Uterus (tissue), 4 donors: ENCODE measurements at regions of chr22 and their contacts with region 1.

Region 1: GRCh38 chr22:46315976-46316375 is 19.3 kb downstream of the GTSE1 start:
- DNase-seq: no peak
- H3K4me3 ChIP-seq: no peak overlapping the region
- H3K27ac ChIP-seq: no peak overlapping the region
- H3K4me1 ChIP-seq: no peaks in the 10 kb centered on the region
- H3K27me3 ChIP-seq: no peaks in the 10 kb centered on the region
- CTCF ChIP-seq: no peak
- POLR2A ChIP-seq: no peak

Region 2: DNA sequence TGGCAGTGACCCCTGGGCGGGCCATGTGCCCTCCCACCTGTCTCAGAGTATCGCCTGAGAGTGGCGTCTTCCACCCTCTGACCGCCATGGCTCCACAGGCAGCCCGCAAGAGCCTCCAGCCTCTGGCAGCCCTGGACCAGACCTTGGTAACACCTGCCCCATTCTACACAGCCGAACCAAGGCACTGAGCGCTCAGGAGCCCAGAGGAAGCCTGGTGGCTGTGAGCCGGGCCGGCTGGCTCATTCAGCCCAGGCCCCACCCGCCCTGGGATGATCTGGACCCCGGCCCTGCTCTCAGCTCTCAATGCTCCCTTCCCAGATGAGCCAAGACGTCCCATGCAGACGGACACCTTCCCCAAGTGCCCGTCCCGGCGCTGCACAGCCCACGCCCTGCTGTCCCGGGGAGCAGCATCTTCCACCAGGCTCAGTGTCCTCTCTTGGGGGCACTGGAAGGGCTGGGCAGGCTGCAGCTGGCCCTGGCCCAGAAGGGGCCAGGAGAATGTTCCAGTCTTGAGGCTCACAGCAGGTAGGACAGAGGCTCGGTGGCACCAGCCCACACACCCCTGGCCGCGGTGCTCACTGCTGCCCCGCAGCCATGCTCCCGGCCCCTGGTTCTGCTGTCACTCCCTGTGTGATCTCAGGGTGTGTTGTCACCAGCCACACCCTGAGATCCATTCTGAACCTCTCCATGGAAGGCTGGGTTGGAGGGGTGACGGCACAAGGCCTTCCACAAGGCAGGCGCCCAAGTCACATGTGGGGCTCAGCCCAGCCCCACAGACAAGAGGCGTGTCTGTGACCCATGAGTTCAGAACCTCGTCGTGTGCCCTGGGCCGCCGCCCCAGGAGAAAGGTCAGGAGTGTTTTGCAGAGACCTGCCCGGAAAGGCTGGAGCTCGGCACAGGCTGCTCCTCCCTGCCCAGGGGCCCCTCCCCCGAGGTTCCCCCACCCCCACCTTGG is 189.9 kb before region 1 on chr22:
- intact Hi-C with region 1: loop called (anchors 2 kb)
- DNase-seq: no peak
- H3K4me3 ChIP-seq: no peak overlapping the region
- H3K27ac ChIP-seq: no peak overlapping the region
- H3K4me1 ChIP-seq: no peaks in the 10 kb centered on the region
- H3K27me3 ChIP-seq: no peaks in the 10 kb centered on the region
- CTCF ChIP-seq: no peak
- POLR2A ChIP-seq: no peak